Caco-2 (cell line): ENCODE measurements at regions of chr3 and their contacts with region 1.

Region 1: DNA sequence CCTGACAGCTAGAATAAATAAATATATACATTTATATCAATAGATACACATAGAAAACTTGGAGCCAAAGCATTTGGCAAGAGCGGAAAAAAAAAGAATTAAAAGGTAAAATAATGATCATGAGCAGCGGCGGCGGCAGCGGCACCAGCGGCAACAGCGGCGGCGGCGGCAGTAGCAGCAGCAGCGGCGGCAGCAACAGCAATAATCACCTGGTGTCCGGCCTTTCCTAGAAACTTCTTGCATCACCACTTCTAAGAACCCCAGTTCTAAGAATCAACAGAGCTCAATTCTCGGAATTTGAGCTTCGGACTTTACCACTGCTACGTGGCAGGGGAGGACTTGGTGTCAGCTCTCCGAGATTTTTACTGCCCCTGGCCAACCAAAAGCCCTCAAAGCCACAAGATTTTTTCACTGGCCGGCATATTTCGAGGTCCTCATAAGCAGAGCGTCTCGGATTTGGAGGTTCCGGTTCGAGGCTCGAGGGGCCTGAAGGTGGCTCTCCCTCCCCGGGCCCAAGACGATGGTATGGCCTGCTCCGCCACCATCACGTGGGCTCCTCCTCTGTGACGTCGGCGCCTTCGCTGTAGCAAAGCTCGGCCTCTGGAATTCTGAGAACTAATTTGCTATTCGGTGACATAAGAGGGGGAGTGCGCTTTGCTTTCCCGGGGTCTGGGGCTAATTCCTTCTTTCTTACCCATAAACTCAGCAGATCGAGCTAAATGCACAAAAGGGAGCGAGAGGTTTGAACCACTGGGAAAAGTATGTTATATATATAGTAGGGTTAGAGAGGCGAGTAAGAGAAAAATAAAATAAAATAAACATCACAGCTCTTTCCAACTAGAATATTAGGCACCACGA is at the start of gene BCL6:
- DNase-seq: peak; percentile 91 to 95
- H3K4me3 ChIP-seq: peak within 1 kb of the TSS; percentile 73
- H3K4me3 Mint-ChIP-seq: peak within 1 kb of the TSS; percentile 98
- H3K27ac Mint-ChIP-seq: peak within 1 kb of the TSS; percentile 97
- H3K4me1 ChIP-seq: peaks cover 37% of the 10 kb centered on the region
- H3K4me1 Mint-ChIP-seq: peaks cover 12% of the 10 kb centered on the region
- H3K27me3 ChIP-seq: no peaks in the 10 kb centered on the region
- H3K27me3 Mint-ChIP-seq: no peaks in the 10 kb centered on the region
- CTCF ChIP-seq: no peak
- total RNA-seq, gene BCL6: 35.8 and 40.4 TPM in 2 replicates

Region 2: DNA sequence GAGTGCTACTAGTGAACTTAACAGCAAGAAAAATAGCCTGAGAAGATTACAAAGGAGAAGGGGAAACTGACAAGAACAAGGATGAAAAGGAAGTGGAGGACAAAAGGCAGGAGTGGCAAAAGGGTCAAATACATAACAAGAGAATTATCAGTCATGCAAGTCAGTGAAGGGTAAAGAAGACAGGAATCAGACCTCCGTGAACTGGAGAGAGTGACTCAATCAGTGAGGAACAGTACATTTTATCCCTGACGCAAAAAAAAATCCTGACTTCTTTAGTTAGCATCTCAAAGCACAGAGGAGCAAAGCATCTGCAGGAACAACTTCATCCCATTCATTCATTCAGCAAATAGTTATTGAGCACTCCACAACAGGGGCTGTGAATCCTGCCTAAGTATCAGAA is 173.0 kb before region 1 on chr3:
- CTCF ChIA-PET with region 1: no interaction called
- POLR2A ChIA-PET with region 1: no interaction called
- intact Hi-C with region 1: no loop called
- DNase-seq: no peak
- H3K4me3 ChIP-seq: no peak overlapping the region
- H3K4me3 Mint-ChIP-seq: no peak overlapping the region
- H3K27ac Mint-ChIP-seq: no peak overlapping the region
- H3K4me1 ChIP-seq: peaks cover 23% of the 10 kb centered on the region
- H3K4me1 Mint-ChIP-seq: peaks cover 10% of the 10 kb centered on the region
- H3K27me3 ChIP-seq: no peaks in the 10 kb centered on the region
- H3K27me3 Mint-ChIP-seq: no peaks in the 10 kb centered on the region
- CTCF ChIP-seq: no peak

Region 3: GRCh38 chr3:187811585-187812250 is 66.3 kb after region 1 on chr3:
- CTCF ChIA-PET with region 1: interaction called, 13 read pairs
- POLR2A ChIA-PET with region 1: interaction called, 12 read pairs
- intact Hi-C with region 1: loop called (anchors 1 kb)
- DNase-seq: no peak
- H3K4me3 ChIP-seq: no peak overlapping the region
- H3K4me3 Mint-ChIP-seq: no peak overlapping the region
- H3K27ac Mint-ChIP-seq: peak overlapping the region; percentile 81
- H3K4me1 ChIP-seq: peaks cover 52% of the 10 kb centered on the region
- H3K4me1 Mint-ChIP-seq: peaks cover 30% of the 10 kb centered on the region
- H3K27me3 ChIP-seq: no peaks in the 10 kb centered on the region
- H3K27me3 Mint-ChIP-seq: no peaks in the 10 kb centered on the region
- CTCF ChIP-seq: no peak

Region 4: DNA sequence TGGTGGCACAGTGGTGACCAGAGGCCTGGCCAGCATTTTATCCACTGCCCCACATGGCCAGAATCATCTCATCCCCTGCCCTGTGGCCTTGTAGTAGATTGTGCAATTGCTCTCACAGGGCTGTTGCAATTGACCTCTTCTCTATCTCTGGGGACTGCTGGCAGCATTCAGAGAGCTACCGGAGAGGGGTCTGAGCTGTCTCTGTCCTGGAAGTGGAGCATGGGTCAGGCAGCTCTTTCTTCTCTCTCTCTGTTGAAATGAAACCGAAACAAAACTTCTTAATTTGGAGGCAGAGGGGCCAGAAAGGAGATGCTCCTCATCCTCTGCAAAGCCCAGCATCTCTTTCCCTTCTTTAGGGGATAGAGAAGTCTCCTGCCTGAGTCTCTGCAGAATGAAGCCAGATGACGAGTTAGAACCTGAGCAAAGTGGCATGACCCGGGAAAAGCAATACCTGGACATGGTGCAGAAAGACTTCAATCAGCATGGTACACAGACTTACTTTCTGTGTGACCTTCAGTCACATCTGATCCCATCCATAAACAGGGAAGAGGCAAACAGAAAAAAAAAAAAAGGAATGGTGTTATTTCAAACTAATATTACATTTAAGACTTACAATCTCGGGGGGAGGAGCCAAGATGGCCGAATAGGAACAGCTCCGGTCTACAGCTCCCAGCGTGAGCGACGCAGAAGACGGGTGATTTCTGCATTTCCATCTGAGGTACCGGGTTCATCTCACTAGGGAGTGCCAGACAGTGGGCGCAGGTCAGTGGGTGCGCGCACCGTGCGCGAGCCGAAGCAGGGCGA is 144.4 kb after region 1 on chr3:
- CTCF ChIA-PET with region 1: interaction called, 3 read pairs
- POLR2A ChIA-PET with region 1: interaction called, 6 read pairs
- intact Hi-C with region 1: loop called (anchors 2 kb)
- DNase-seq: peak; percentile 28 to 51
- H3K4me3 ChIP-seq: peak overlapping the region; percentile 40
- H3K4me3 Mint-ChIP-seq: peak overlapping the region; percentile 82
- H3K27ac Mint-ChIP-seq: peak overlapping the region; percentile 84
- H3K4me1 ChIP-seq: peaks cover 10% of the 10 kb centered on the region
- H3K4me1 Mint-ChIP-seq: peaks cover 13% of the 10 kb centered on the region
- H3K27me3 ChIP-seq: no peaks in the 10 kb centered on the region
- H3K27me3 Mint-ChIP-seq: no peaks in the 10 kb centered on the region
- CTCF ChIP-seq: no peak

Region 5: GRCh38 chr3:188154014-188154808 is 408.8 kb after region 1 on chr3 and contains the start of gene LPP:
- CTCF ChIA-PET with region 1: interaction called, 8 read pairs
- POLR2A ChIA-PET with region 1: interaction called, 36 read pairs
- intact Hi-C with region 1: loop called (anchors 2 kb)
- DNase-seq: peak; percentile 79 to 86
- H3K4me3 ChIP-seq: peak within 1 kb of the TSS; percentile 68
- H3K4me3 Mint-ChIP-seq: peak within 1 kb of the TSS; percentile 84
- H3K27ac Mint-ChIP-seq: peak within 1 kb of the TSS; percentile 89
- H3K4me1 ChIP-seq: peaks cover 66% of the 10 kb centered on the region
- H3K4me1 Mint-ChIP-seq: peaks cover 48% of the 10 kb centered on the region
- H3K27me3 ChIP-seq: no peaks in the 10 kb centered on the region
- H3K27me3 Mint-ChIP-seq: no peaks in the 10 kb centered on the region
- CTCF ChIP-seq: peak in 1 of 2 experiments; percentile 27
- total RNA-seq, gene LPP: 120 and 147 TPM in 2 replicates

Region 6: GRCh38 chr3:188584162-188584529 is 838.7 kb after region 1 on chr3:
- CTCF ChIA-PET with region 1: no interaction called
- POLR2A ChIA-PET with region 1: no interaction called
- intact Hi-C with region 1: loop called (anchors 10 kb)
- DNase-seq: peak in 1 of 2 experiments; percentile 9
- H3K4me3 ChIP-seq: no peak overlapping the region
- H3K4me3 Mint-ChIP-seq: no peak overlapping the region
- H3K27ac Mint-ChIP-seq: no peak overlapping the region
- H3K4me1 ChIP-seq: peaks cover 24% of the 10 kb centered on the region
- H3K4me1 Mint-ChIP-seq: peaks cover 7% of the 10 kb centered on the region
- H3K27me3 ChIP-seq: no peaks in the 10 kb centered on the region
- H3K27me3 Mint-ChIP-seq: no peaks in the 10 kb centered on the region
- CTCF ChIP-seq: no peak

Region 7: DNA sequence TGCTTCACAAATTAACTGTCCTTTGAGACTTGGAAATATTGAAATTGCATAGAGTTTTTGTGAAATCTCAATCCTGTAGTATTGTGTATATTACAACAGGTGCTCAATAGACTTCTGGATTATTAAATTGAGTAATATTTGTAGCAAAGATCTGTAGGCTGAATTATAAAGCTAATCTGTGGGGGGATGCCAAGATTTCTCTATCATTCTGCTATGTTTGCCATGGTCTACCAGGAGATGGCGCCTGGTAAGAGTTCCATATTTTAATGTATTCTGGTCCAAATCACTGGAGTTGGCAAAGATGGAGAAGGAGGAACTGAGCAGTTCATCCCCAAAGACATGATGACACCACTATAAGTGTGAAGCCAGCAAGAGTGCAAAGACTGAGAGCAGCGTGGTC is 1085.5 kb after region 1 on chr3:
- CTCF ChIA-PET with region 1: no interaction called
- POLR2A ChIA-PET with region 1: no interaction called
- intact Hi-C with region 1: loop called (anchors 10 kb)
- DNase-seq: no peak
- H3K4me3 ChIP-seq: no peak overlapping the region
- H3K4me3 Mint-ChIP-seq: no peak overlapping the region
- H3K27ac Mint-ChIP-seq: no peak overlapping the region
- H3K4me1 ChIP-seq: peaks cover 8% of the 10 kb centered on the region; the same call in 1 of the 2 replicates
- H3K4me1 Mint-ChIP-seq: peaks cover 18% of the 10 kb centered on the region
- H3K27me3 ChIP-seq: no peaks in the 10 kb centered on the region
- H3K27me3 Mint-ChIP-seq: no peaks in the 10 kb centered on the region
- CTCF ChIP-seq: peak in 1 of 2 experiments; percentile 22